ENCODE measurements at regions of chr2 and their contacts with region 1.

Region 1: DNA sequence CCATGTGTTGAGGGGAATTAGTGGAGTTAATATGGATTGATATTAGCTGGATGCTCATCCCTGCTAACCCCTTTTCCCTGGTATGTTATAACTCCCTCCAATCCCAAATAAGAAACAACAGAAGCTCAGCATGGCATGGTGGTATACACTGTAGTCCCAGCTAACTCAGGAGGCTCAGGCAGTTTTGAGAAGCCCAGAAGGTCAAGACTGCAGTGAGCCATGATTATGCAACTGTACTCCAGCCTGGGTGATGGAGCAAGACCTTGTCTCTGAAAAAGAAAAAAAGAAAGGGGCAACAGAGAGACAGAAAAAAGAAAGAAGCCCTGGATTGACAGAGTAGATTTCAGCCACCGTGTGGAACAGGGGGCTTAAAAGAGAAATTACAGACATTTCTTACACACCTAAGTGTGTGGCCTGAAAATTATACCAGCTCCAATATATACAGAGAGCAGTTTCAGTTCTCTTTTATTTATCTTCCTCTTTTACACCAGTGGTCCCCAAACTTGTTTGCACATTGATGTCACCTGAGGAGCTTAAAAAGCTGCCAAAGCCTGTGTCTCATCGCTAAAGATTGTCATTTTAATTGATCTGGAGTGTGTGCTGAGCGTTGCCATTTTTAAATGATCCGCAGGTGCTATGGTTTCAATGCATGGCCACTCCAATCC is 203.6 kb downstream of the UBE2E3 start:
- DNase-seq: no peak
- H3K4me3 ChIP-seq: no peak overlapping the region
- H3K4me3 Mint-ChIP-seq: no peak overlapping the region
- H3K27ac ChIP-seq: no peak overlapping the region
- H3K27ac Mint-ChIP-seq: no peak overlapping the region
- H3K4me1 ChIP-seq: peaks cover 12% of the 10 kb centered on the region
- H3K4me1 Mint-ChIP-seq: peaks cover 12 to 24% (median 19%) of the 10 kb centered on the region in 4 donors
- H3K27me3 ChIP-seq: no peaks in the 10 kb centered on the region
- H3K27me3 Mint-ChIP-seq: no peaks in the 10 kb centered on the region

Region 2: GRCh38 chr2:180991820-180992219 is 192.2 kb before region 1 on chr2:
- CTCF ChIA-PET with region 1: no interaction called
- POLR2A ChIA-PET with region 1: no interaction called
- intact Hi-C with region 1: no loop called
- DNase-seq: no peak
- H3K4me3 ChIP-seq: no peak overlapping the region
- H3K4me3 Mint-ChIP-seq: no peak overlapping the region
- H3K27ac ChIP-seq: no peak overlapping the region
- H3K27ac Mint-ChIP-seq: no peak overlapping the region
- H3K4me1 ChIP-seq: no peaks in the 10 kb centered on the region
- H3K4me1 Mint-ChIP-seq: peaks cover 11 to 22% (median 18%) of the 10 kb centered on the region in 4 donors
- H3K27me3 ChIP-seq: no peaks in the 10 kb centered on the region
- H3K27me3 Mint-ChIP-seq: no peaks in the 10 kb centered on the region

Region 3: DNA sequence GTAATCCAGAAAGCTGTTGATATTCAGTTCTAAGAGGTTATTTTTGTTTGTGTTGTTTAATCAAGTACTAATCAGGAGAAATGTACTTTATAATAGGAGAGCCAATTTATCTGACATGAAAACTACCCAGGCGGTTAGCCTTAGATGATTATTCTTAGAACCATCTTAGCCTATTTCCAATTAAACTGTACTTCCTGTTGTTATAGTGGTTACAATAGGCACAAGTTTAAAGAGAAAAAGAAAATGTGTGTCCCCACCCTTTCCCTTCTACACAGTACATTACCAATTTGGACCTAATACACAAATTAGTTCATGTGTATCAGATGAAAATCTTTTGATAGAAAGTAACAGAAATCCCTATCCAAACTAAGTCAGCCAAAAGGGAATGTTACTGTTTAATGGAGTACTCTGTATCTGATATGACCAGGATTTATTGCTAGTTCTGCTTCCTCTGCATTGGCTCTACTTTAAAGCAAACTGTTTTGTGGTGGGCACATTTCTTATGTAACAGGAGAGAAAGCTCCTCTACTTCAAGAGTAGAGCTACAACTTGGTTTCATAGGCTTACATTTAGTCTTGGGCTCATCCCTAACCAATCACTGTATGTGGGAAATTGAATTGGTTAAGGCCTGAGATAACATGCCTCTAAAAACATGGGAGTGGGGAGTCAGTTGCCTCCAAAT is 14.3 kb after region 1 on chr2:
- CTCF ChIA-PET with region 1: interaction called, 6 read pairs
- POLR2A ChIA-PET with region 1: interaction called, 4 read pairs
- intact Hi-C with region 1: loop called (anchors 2 kb)
- DNase-seq: peak in 4 of 5 donors; percentile 18 to 39 (median 30)
- H3K4me3 ChIP-seq: no peak overlapping the region
- H3K4me3 Mint-ChIP-seq: peak overlapping the region; percentile 33 to 74 (median 66)
- H3K27ac ChIP-seq: peak overlapping the region; percentile 1
- H3K27ac Mint-ChIP-seq: peak overlapping the region; percentile 67 to 93 (median 88)
- H3K4me1 ChIP-seq: peaks cover 48% of the 10 kb centered on the region
- H3K4me1 Mint-ChIP-seq: peaks cover 40 to 56% (median 44%) of the 10 kb centered on the region in 4 donors
- H3K27me3 ChIP-seq: no peaks in the 10 kb centered on the region
- H3K27me3 Mint-ChIP-seq: no peaks in the 10 kb centered on the region

Region 4: DNA sequence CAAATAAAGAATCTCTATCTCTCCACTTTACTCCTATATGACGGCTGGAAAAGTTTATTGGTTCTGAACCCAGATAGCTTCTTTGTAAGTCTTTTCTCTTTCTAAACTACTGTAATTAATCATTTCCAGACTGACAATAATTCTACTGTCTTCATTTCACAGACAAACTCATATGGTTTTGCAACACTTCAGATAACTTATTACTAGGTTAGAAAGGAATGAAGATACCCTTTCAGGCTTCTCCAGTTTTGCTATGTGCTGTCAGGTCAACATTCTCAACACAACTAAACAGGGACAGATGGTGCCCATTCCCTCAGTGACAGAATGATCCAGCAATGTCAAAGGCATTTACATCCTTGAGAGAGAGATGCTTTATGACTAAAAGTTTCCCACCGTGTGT is 74.7 kb after region 1 on chr2:
- CTCF ChIA-PET with region 1: no interaction called
- POLR2A ChIA-PET with region 1: no interaction called
- intact Hi-C with region 1: no loop called
- DNase-seq: no peak
- H3K4me3 ChIP-seq: no peak overlapping the region
- H3K4me3 Mint-ChIP-seq: no peak overlapping the region
- H3K27ac ChIP-seq: no peak overlapping the region
- H3K27ac Mint-ChIP-seq: no peak overlapping the region
- H3K4me1 ChIP-seq: peaks cover 9% of the 10 kb centered on the region
- H3K4me1 Mint-ChIP-seq: peaks cover 0 to 12% (median 11%) of the 10 kb centered on the region in 4 donors
- H3K27me3 ChIP-seq: no peaks in the 10 kb centered on the region
- H3K27me3 Mint-ChIP-seq: no peaks in the 10 kb centered on the region

Measured in CD4-positive, alpha-beta memory T cell (primary cell).